CD8-positive, alpha-beta T cell (primary cell): ENCODE measurements at regions of chr18 and their contacts with region 1.

Region 1: GRCh38 chr18:46199515-46200147 is 95.4 kb downstream of the HAUS1 start:
- DNase-seq: no peak
- ATAC-seq: no peak
- H3K4me3 ChIP-seq: no peak overlapping the region
- H3K4me3 Mint-ChIP-seq: no peak overlapping the region
- H3K27ac ChIP-seq: no peak overlapping the region
- H3K27ac Mint-ChIP-seq: peak overlapping the region; percentile 62
- H3K4me1 ChIP-seq: peaks cover 30% of the 10 kb centered on the region
- H3K4me1 Mint-ChIP-seq: peaks cover 70% of the 10 kb centered on the region
- H3K27me3 ChIP-seq: no peaks in the 10 kb centered on the region
- H3K27me3 Mint-ChIP-seq: no peaks in the 10 kb centered on the region
- CTCF ChIP-seq: no peak

Region 2: GRCh38 chr18:46134920-46135675 is 64.5 kb before region 1 on chr18:
- CTCF ChIA-PET with region 1: no interaction called
- POLR2A ChIA-PET with region 1: no interaction called
- intact Hi-C with region 1: no loop called
- DNase-seq: no peak
- ATAC-seq: no peak
- H3K4me3 ChIP-seq: no peak overlapping the region
- H3K4me3 Mint-ChIP-seq: no peak overlapping the region
- H3K27ac ChIP-seq: no peak overlapping the region
- H3K27ac Mint-ChIP-seq: peak overlapping the region; percentile 24
- H3K4me1 ChIP-seq: no peaks in the 10 kb centered on the region
- H3K4me1 Mint-ChIP-seq: no peaks in the 10 kb centered on the region
- H3K27me3 ChIP-seq: no peaks in the 10 kb centered on the region
- H3K27me3 Mint-ChIP-seq: no peaks in the 10 kb centered on the region
- CTCF ChIP-seq: no peak

Region 3: GRCh38 chr18:46182633-46183358 is 16.8 kb before region 1 on chr18:
- CTCF ChIA-PET with region 1: no interaction called
- POLR2A ChIA-PET with region 1: no interaction called
- intact Hi-C with region 1: loop called in 1 of 2 experiments (anchors 2 kb)
- DNase-seq: no peak
- ATAC-seq: no peak
- H3K4me3 ChIP-seq: no peak overlapping the region
- H3K4me3 Mint-ChIP-seq: peak overlapping the region; percentile 4
- H3K27ac ChIP-seq: no peak overlapping the region
- H3K27ac Mint-ChIP-seq: peak overlapping the region; percentile 16
- H3K4me1 ChIP-seq: peaks cover 36% of the 10 kb centered on the region
- H3K4me1 Mint-ChIP-seq: peaks cover 63% of the 10 kb centered on the region
- H3K27me3 ChIP-seq: no peaks in the 10 kb centered on the region
- H3K27me3 Mint-ChIP-seq: no peaks in the 10 kb centered on the region
- CTCF ChIP-seq: no peak

Region 4: DNA sequence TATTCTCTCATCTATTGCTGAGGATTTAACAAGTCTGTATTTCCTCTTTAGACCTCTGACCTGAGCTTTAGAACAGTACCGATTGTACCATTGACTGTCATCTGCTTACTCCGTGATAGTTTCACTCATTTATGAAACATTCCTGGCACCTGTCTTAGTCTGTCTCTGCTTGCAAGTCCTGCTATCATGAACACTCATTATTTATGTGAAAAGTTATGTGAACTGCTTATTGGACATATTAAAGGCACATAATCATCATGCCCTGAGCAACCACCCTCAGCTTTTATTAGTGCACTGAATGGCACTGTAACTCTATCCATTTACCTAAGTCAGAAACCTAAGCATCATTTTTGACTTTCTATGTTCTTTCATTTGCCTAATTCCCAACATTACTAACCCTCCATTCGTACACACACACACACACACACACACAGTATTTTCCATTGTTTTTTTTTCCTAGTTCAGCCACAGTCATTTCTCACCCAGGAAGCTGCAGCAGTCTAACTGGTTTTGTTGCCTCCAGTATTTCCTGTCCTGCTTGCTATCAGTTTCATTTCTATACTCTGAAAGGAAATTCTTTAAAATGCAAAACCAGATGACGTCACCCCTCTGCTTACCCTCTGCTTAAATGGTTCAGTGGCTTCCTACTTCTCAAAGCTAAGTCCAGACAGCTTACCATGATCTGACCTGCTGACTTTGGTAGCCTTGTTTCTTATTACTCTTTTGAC is 50.6 kb after region 1 on chr18:
- CTCF ChIA-PET with region 1: no interaction called
- POLR2A ChIA-PET with region 1: no interaction called
- intact Hi-C with region 1: no loop called
- DNase-seq: peak in 7 of 9 experiments; percentile 16 to 93 (median 51)
- ATAC-seq: peak; percentile 93
- H3K4me3 ChIP-seq: peak overlapping the region; percentile 30 to 44
- H3K4me3 Mint-ChIP-seq: peak overlapping the region; percentile 86
- H3K27ac ChIP-seq: peak overlapping the region; percentile 25 to 99
- H3K27ac Mint-ChIP-seq: peak overlapping the region; percentile 98
- H3K4me1 ChIP-seq: peaks cover 44% of the 10 kb centered on the region
- H3K4me1 Mint-ChIP-seq: peaks cover 50% of the 10 kb centered on the region
- H3K27me3 ChIP-seq: no peaks in the 10 kb centered on the region
- H3K27me3 Mint-ChIP-seq: no peaks in the 10 kb centered on the region
- CTCF ChIP-seq: no peak